Caco-2 (cell line): ENCODE measurements at regions of chr12 and their contacts with region 1.

Region 1: GRCh38 chr12:38138225-38139221 is 178.1 kb upstream of the ALG10B start:
- DNase-seq: peak; percentile 75 to 82
- H3K4me3 ChIP-seq: peak overlapping the region; percentile 28
- H3K4me3 Mint-ChIP-seq: peak overlapping the region; percentile 72
- H3K27ac Mint-ChIP-seq: no peak overlapping the region
- H3K4me1 ChIP-seq: peaks cover 4% of the 10 kb centered on the region; the same call in 1 of the 2 replicates
- H3K4me1 Mint-ChIP-seq: no peaks in the 10 kb centered on the region
- H3K27me3 ChIP-seq: no peaks in the 10 kb centered on the region
- H3K27me3 Mint-ChIP-seq: peaks cover 3% of the 10 kb centered on the region
- CTCF ChIP-seq: peak; percentile 91 to 94

Region 2: GRCh38 chr12:38053655-38054464 is 84.7 kb before region 1 on chr12:
- CTCF ChIA-PET with region 1: no interaction called
- POLR2A ChIA-PET with region 1: no interaction called
- intact Hi-C with region 1: loop called (anchors 1 kb)
- DNase-seq: peak; percentile 58 to 62
- H3K4me3 ChIP-seq: no peak overlapping the region
- H3K4me3 Mint-ChIP-seq: no peak overlapping the region
- H3K27ac Mint-ChIP-seq: no peak overlapping the region
- H3K4me1 ChIP-seq: no peaks in the 10 kb centered on the region
- H3K4me1 Mint-ChIP-seq: no peaks in the 10 kb centered on the region
- H3K27me3 ChIP-seq: no peaks in the 10 kb centered on the region
- H3K27me3 Mint-ChIP-seq: no peaks in the 10 kb centered on the region
- CTCF ChIP-seq: peak; percentile 37 to 45

Region 3: DNA sequence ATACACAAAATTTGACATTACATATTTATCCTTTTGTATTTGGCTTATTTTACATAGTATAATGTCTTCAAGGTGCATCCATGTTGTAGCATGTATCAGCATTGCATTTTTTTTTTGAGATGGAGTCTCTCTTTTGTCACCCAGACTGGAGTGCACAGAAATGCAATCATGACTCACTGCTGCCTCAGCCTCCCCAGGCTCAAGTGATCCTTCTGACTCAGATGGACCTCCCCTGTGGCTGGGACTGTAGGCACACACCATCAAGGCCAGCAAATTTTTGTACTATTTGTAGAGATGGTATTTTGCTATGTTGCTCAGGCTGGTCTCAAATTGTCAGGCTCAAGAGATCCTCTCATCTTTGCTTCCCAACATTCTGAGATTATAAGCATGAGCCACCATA is 36.3 kb before region 1 on chr12:
- CTCF ChIA-PET with region 1: no interaction called
- POLR2A ChIA-PET with region 1: no interaction called
- intact Hi-C with region 1: no loop called
- DNase-seq: no peak
- H3K4me3 ChIP-seq: no peak overlapping the region
- H3K4me3 Mint-ChIP-seq: no peak overlapping the region
- H3K27ac Mint-ChIP-seq: no peak overlapping the region
- H3K4me1 ChIP-seq: no peaks in the 10 kb centered on the region
- H3K4me1 Mint-ChIP-seq: no peaks in the 10 kb centered on the region
- H3K27me3 ChIP-seq: no peaks in the 10 kb centered on the region
- H3K27me3 Mint-ChIP-seq: no peaks in the 10 kb centered on the region
- CTCF ChIP-seq: no peak

Region 4: GRCh38 chr12:38124247-38125012 is 14.1 kb before region 1 on chr12:
- CTCF ChIA-PET with region 1: no interaction called
- POLR2A ChIA-PET with region 1: no interaction called
- intact Hi-C with region 1: no loop called
- DNase-seq: peak; percentile 55 to 58
- H3K4me3 ChIP-seq: no peak overlapping the region
- H3K4me3 Mint-ChIP-seq: peak overlapping the region; percentile 35
- H3K27ac Mint-ChIP-seq: peak overlapping the region; percentile 80
- H3K4me1 ChIP-seq: peaks cover 16% of the 10 kb centered on the region
- H3K4me1 Mint-ChIP-seq: peaks cover 7% of the 10 kb centered on the region
- H3K27me3 ChIP-seq: no peaks in the 10 kb centered on the region
- H3K27me3 Mint-ChIP-seq: no peaks in the 10 kb centered on the region
- CTCF ChIP-seq: no peak

Region 5: GRCh38 chr12:38332814-38333213 is 194.3 kb after region 1 on chr12:
- CTCF ChIA-PET with region 1: no interaction called
- POLR2A ChIA-PET with region 1: no interaction called
- intact Hi-C with region 1: no loop called
- DNase-seq: no peak
- H3K4me3 ChIP-seq: no peak overlapping the region
- H3K4me3 Mint-ChIP-seq: no peak overlapping the region
- H3K27ac Mint-ChIP-seq: no peak overlapping the region
- H3K4me1 ChIP-seq: no peaks in the 10 kb centered on the region
- H3K4me1 Mint-ChIP-seq: no peaks in the 10 kb centered on the region
- H3K27me3 ChIP-seq: no peaks in the 10 kb centered on the region
- H3K27me3 Mint-ChIP-seq: no peaks in the 10 kb centered on the region
- CTCF ChIP-seq: no peak